Mammary epithelial cell (primary cell): ENCODE measurements at regions of chr1 and their contacts with region 1.

Region 1: GRCh38 chr1:18597160-18598042 is 33.2 kb upstream of the PAX7 start:
- DNase-seq: peak; percentile 21
- H3K4me3 ChIP-seq: no peak overlapping the region
- H3K27ac ChIP-seq: no peak overlapping the region
- H3K4me1 ChIP-seq: no peaks in the 10 kb centered on the region
- H3K27me3 ChIP-seq: no peaks in the 10 kb centered on the region
- CTCF ChIP-seq: peak; percentile 91 to 99

Region 2: DNA sequence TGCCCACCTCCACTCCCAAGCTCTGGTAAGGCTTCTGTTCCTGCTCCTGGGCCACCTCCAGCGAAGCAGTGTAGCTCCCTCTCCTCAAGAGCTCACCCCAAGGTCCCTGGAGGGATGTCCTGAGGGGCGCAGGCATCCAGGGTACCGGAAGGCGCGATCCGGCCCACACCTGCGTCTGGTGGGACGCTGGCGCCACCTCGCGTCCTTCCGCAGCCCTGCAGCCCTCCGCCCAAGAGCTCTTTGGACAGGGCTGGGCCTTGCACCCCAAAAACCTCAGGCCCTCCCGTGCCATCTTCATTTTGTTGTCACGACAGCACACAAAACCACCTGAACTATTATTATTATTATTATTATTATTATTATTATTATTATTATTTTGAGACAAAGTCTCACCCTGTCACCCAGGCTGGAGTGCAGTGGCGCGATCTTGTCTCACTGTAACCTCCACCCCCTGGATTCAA is 16.0 kb before region 1 on chr1:
- CTCF ChIA-PET with region 1: no interaction called
- dilution Hi-C with region 1: no loop called
- in situ Hi-C with region 1: no loop called
- intact Hi-C with region 1: no loop called
- DNase-seq: no peak
- H3K4me3 ChIP-seq: no peak overlapping the region
- H3K27ac ChIP-seq: no peak overlapping the region
- H3K4me1 ChIP-seq: peaks cover 4% of the 10 kb centered on the region
- H3K27me3 ChIP-seq: no peaks in the 10 kb centered on the region
- CTCF ChIP-seq: peak; percentile 70 to 86

Region 3: DNA sequence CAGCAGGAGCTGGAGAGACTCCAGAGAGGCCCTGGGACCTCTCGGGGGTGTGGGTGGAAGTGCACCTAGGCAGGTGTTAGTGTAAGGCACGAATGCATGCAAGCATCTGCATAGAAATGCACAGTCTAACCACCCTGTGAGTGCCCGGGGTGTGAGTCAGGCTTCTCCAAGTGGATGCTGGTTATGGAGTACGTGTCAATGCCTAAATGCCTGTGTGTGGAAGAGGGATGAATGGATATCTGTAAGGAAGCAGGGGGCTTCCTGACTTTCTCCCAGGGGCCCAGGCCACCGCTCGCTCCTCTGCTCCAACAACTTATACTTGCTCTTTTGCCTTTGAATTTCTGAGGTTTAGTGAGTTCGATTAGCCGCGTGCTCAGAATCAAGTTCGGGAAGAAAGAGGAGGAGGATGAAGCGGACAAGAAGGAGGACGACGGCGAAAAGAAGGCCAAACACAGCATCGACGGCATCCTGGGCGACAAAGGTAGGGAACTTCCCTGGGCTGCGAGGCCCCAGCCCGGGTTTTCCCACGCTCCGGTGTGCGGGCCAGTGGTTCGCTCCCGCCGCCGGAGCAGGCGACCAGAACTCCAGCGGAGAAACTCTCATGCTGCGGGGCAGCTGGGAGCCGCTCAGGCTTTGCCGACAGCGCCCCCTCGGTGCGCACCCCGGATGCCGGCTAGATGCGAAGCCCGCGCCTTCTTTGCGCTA is 38.6 kb after region 1 on chr1:
- CTCF ChIA-PET with region 1: no interaction called
- dilution Hi-C with region 1: loop called (anchors 5 kb)
- in situ Hi-C with region 1: no loop called
- intact Hi-C with region 1: no loop called
- DNase-seq: peak; percentile 46
- H3K4me3 ChIP-seq: no peak overlapping the region
- H3K27ac ChIP-seq: no peak overlapping the region
- H3K4me1 ChIP-seq: no peaks in the 10 kb centered on the region
- H3K27me3 ChIP-seq: peaks cover 90% of the 10 kb centered on the region
- CTCF ChIP-seq: peak in 1 of 2 donors; percentile 3

Region 4: GRCh38 chr1:18676332-18676781 is 79.0 kb after region 1 on chr1:
- CTCF ChIA-PET with region 1: no interaction called
- dilution Hi-C with region 1: loop called (anchors 5 kb)
- in situ Hi-C with region 1: loop called (anchors 5 kb)
- intact Hi-C with region 1: loop called (anchors 1 kb)
- DNase-seq: no peak
- H3K4me3 ChIP-seq: no peak overlapping the region
- H3K27ac ChIP-seq: no peak overlapping the region
- H3K4me1 ChIP-seq: no peaks in the 10 kb centered on the region
- H3K27me3 ChIP-seq: no peaks in the 10 kb centered on the region
- CTCF ChIP-seq: no peak

Region 5: DNA sequence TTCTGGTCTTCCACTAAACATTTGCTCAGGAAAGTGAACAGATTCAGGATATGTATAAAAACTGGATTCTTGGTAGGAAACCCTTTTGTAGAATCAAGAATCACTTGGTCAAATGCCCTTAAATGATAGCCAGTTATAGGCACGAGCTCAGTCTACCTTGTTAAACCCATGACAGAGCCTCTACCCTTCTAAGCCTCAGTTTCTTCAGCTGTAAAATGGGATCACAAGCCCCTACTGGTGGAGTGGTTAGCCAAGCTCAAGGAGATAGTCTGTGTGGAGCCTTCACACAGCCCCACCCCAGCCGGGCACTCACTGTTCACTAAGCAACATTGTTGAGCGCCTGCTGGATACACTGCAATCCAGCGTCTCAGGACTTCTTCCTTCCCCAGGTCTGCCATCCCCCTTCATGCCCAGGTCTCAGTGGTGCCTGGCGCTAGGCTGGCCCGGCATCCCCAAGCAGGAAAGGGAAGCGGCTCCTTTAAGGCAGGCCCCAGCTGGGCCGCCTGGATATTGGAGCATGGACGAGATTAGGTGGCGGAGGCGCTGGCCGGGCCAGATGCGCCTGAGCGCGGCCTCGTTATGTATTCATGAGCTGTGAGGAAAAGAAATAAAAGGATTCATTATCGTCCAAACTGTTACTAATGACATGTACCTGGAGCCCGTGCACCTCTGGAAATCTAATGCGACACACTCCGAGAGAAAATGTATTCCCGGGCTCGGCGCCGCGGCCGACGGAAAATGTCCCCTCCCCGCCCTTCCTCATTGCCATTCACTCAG is 186.5 kb after region 1 on chr1:
- CTCF ChIA-PET with region 1: no interaction called
- dilution Hi-C with region 1: no loop called
- in situ Hi-C with region 1: no loop called
- intact Hi-C with region 1: no loop called
- DNase-seq: no peak
- H3K4me3 ChIP-seq: no peak overlapping the region
- H3K27ac ChIP-seq: no peak overlapping the region
- H3K4me1 ChIP-seq: no peaks in the 10 kb centered on the region
- H3K27me3 ChIP-seq: no peaks in the 10 kb centered on the region
- CTCF ChIP-seq: no peak

Region 6: DNA sequence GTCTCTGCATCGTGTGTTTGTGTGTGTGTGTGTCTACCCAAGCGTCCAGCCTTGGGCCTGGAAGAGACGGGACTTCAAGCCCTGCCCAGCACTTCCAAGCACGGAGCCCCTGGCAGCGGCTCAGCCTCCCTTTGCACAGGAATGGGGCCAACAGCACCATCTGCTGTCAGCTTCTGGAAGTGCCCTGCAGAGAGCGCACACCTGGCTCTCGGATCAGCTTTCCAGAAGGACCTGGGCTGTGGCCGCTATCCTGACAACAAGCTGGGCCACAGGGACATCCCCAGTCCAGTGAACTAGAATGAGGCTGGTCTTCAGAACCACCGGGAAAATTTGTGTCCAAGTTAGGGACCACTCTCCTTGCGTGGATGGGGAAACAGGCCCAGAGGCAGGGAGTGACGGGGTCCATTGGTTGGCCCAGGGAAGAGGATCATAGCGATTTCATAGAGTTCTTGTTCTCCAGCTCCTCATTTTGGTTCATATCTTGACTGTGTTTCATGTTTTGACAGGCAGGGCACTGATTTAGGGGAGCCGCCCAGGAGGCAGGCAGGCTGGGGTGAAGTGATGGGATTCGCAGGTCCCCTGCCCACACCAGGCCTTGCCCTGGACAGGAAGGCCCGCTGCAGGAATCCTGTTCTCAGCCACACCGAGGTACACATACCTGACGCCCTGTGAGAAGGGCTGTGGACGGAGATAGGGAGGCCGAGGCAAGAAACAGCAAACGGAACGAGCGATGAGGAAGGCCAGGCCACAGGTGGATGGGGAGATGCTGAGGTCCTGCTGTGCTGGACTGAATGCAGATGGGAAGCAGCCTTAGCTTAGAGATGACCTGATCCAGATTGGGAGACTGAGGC is 223.6 kb after region 1 on chr1:
- CTCF ChIA-PET with region 1: no interaction called
- dilution Hi-C with region 1: no loop called
- in situ Hi-C with region 1: loop called (anchors 5 kb)
- intact Hi-C with region 1: loop called (anchors 1 kb)
- DNase-seq: peak; percentile 38
- H3K4me3 ChIP-seq: no peak overlapping the region
- H3K27ac ChIP-seq: no peak overlapping the region
- H3K4me1 ChIP-seq: no peaks in the 10 kb centered on the region
- H3K27me3 ChIP-seq: peaks cover 4% of the 10 kb centered on the region
- CTCF ChIP-seq: peak; percentile 94 to 97

Region 7: GRCh38 chr1:18902523-18903290 is 305.3 kb after region 1 on chr1 and contains the start of gene ALDH4A1:
- CTCF ChIA-PET with region 1: no interaction called
- dilution Hi-C with region 1: no loop called
- in situ Hi-C with region 1: no loop called
- intact Hi-C with region 1: loop called (anchors 1 kb)
- DNase-seq: peak; percentile 98
- H3K4me3 ChIP-seq: peak within 1 kb of the TSS; percentile 74 to 79 (median 77)
- H3K27ac ChIP-seq: peak within 1 kb of the TSS; percentile 88
- H3K4me1 ChIP-seq: peaks cover 38% of the 10 kb centered on the region
- H3K27me3 ChIP-seq: no peaks in the 10 kb centered on the region
- CTCF ChIP-seq: peak in 1 of 2 donors; percentile 10
- total RNA-seq, gene ALDH4A1: 24.0 to 41.4 TPM